ENCODE measurements at regions of chr12 and their contacts with region 1.

Region 1: GRCh38 chr12:50948798-50949197 is 3.5 kb upstream of the HIGD1C start:
- DNase-seq: no peak
- CTCF ChIP-seq: no peak

Region 2: DNA sequence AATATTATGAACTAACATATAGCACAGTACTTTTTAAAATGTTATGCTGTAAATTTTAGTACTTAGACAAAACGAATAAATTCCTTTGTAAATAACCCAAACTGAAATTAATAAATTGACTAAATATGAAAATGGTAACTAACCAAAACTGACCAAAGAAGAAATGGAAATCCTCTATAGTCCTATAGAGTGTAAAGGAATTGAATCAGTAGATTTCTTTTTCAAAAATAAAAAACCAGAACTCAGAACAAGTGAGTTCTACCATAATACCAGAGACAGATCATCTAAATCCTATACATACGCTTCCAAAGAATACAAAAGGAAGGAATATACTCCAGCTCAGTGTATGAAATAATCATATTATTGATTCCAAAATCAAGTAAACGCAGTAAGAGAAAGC is 66.2 kb before region 1 on chr12:
- CTCF ChIA-PET with region 1: no interaction called
- POLR2A ChIA-PET with region 1: interaction called, 10 read pairs
- DNase-seq: no peak
- CTCF ChIP-seq: no peak